Activated CD8-positive, alpha-beta T cell treated with anti-CD3 and anti-CD28 coated beads for 36 hours (primary cell): ENCODE measurements at regions of chr7 and their contacts with region 1.

Region 1: GRCh38 chr7:149838224-149838947 is at the start of gene ZNF862:
- DNase-seq: peak; percentile 98
- ATAC-seq: peak; percentile 98
- H3K4me3 Mint-ChIP-seq: peak within 1 kb of the TSS; percentile 79
- H3K27ac Mint-ChIP-seq: peak within 1 kb of the TSS; percentile 71
- H3K4me1 Mint-ChIP-seq: peaks cover 32% of the 10 kb centered on the region
- H3K27me3 Mint-ChIP-seq: no peaks in the 10 kb centered on the region
- CTCF ChIP-seq: no peak
- total RNA-seq, gene ZNF862: 11.0 to 12.4 TPM

Region 2: GRCh38 chr7:149729983-149730801 is 108.2 kb before region 1 on chr7:
- CTCF ChIA-PET with region 1: no interaction called
- POLR2A ChIA-PET with region 1: no interaction called
- intact Hi-C with region 1: no loop called
- DNase-seq: no peak
- ATAC-seq: no peak
- H3K4me3 Mint-ChIP-seq: no peak overlapping the region
- H3K27ac Mint-ChIP-seq: no peak overlapping the region
- H3K4me1 Mint-ChIP-seq: no peaks in the 10 kb centered on the region
- H3K27me3 Mint-ChIP-seq: no peaks in the 10 kb centered on the region
- CTCF ChIP-seq: no peak

Region 3: GRCh38 chr7:149854611-149855360 is 16.4 kb after region 1 on chr7:
- CTCF ChIA-PET with region 1: interaction called, 12 read pairs
- POLR2A ChIA-PET with region 1: interaction called, 16 read pairs
- intact Hi-C with region 1: no loop called
- DNase-seq: peak; percentile 36
- ATAC-seq: peak; percentile 43
- H3K4me3 Mint-ChIP-seq: no peak overlapping the region
- H3K27ac Mint-ChIP-seq: no peak overlapping the region
- H3K4me1 Mint-ChIP-seq: peaks cover 47% of the 10 kb centered on the region
- H3K27me3 Mint-ChIP-seq: no peaks in the 10 kb centered on the region
- CTCF ChIP-seq: no peak

Region 4: DNA sequence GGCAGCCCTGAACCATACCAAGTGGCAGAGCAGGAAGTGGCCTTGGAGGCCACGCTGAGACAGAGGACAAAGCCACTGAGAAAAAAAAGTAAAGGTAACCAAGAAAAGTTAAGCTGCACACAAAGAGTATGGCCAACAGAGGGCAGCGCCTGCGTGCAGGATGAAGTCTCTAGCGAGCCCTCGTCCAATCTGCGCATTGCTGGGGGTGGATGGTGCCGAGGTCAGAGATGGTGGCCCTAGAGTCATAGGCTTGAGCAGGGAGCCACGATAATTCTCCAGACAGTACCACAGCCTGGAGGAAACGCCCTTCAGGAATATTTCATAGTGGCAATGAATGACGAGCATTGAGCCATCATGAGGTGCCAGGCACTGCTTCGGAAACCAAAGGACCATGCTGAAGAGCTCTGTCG is 45.1 kb after region 1 on chr7:
- CTCF ChIA-PET with region 1: interaction called, 12 read pairs
- POLR2A ChIA-PET with region 1: interaction called, 5 read pairs
- intact Hi-C with region 1: no loop called
- DNase-seq: peak; percentile 85
- ATAC-seq: peak; percentile 94
- H3K4me3 Mint-ChIP-seq: no peak overlapping the region
- H3K27ac Mint-ChIP-seq: peak overlapping the region; percentile 52
- H3K4me1 Mint-ChIP-seq: peaks cover 4% of the 10 kb centered on the region
- H3K27me3 Mint-ChIP-seq: no peaks in the 10 kb centered on the region
- CTCF ChIP-seq: peak; percentile 58